ENCODE measurements at regions of chr9 and their contacts with region 1.

Region 1: DNA sequence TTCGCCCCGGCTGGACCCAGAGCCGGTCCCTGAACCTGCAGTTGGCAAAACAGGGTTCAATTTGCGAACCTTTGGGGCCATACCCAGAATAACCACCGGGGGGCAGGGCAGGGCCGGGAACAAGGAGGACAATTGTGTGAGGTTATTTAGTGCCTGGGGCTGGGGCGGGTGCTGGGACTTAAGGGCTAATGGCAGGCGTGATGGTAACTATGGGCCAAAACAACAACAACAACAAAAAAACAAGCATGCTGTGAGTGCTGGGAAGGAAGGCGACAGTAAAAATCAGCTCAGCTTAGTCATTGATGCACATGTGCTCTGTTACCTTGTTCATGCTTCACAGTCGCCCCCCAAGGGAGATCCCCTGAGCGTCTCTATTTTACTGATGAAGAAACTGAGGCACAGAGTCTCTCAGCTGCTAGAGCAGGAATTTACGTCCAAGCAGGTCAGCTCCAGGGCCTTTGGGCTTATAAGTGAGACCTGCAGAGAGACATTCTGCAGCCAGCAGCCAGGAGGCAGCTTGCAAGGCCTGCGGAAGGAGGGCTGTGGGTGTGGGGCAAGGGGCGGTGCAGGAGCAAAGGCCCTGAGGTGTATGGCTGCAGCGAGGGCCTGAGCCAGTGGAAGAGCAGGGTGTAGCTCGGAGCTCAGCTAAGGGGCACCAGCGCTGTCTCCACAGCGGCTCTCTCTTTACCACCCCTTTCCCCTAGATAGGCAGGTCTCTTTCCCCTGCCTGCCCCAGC is 106.0 kb downstream of the PHF2 start:
- DNase-seq: peak; percentile 77 to 79
- H3K4me3 ChIP-seq: no peak overlapping the region
- H3K27ac ChIP-seq: peak overlapping the region in 2 of 5 donors; percentile 80 to 86
- H3K4me1 ChIP-seq: peaks cover 0 to 51% (median 29%) of the 10 kb centered on the region in 4 donors
- H3K27me3 ChIP-seq: no peaks in the 10 kb centered on the region
- CTCF ChIP-seq: peak in 5 of 7 experiments; percentile 70 to 85 (median 82)
- EP300 ChIP-seq: no peak
- POLR2A ChIP-seq: no peak

Region 2: DNA sequence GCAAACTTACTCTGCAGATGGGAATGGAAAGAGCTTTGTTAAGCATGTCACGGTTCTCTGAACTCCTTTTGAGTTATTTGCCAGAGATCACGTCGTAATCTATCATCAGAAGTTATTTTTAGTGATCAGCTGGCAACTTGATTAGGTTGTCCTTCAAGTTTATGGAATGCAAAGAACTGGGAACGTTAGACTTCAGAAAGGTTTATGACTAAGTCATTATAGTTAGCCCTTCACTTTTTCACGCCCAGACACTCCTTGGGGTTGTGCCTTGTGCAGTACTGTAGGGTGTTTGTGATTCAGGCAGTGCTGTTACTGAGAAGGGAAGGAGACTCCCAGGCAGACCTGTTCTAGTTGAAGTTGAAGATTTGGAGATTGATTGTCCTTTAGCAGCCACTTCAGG is 132.8 kb before region 1 on chr9:
- intact Hi-C with region 1: no loop called
- DNase-seq: peak in 1 of 2 donors; percentile 42
- H3K4me3 ChIP-seq: no peak overlapping the region
- H3K27ac ChIP-seq: peak overlapping the region in 1 of 5 donors; percentile 58
- H3K4me1 ChIP-seq: peaks cover 0 to 14% (median 9%) of the 10 kb centered on the region in 4 donors
- H3K27me3 ChIP-seq: no peaks in the 10 kb centered on the region
- CTCF ChIP-seq: no peak
- EP300 ChIP-seq: no peak
- POLR2A ChIP-seq: no peak

Region 3: DNA sequence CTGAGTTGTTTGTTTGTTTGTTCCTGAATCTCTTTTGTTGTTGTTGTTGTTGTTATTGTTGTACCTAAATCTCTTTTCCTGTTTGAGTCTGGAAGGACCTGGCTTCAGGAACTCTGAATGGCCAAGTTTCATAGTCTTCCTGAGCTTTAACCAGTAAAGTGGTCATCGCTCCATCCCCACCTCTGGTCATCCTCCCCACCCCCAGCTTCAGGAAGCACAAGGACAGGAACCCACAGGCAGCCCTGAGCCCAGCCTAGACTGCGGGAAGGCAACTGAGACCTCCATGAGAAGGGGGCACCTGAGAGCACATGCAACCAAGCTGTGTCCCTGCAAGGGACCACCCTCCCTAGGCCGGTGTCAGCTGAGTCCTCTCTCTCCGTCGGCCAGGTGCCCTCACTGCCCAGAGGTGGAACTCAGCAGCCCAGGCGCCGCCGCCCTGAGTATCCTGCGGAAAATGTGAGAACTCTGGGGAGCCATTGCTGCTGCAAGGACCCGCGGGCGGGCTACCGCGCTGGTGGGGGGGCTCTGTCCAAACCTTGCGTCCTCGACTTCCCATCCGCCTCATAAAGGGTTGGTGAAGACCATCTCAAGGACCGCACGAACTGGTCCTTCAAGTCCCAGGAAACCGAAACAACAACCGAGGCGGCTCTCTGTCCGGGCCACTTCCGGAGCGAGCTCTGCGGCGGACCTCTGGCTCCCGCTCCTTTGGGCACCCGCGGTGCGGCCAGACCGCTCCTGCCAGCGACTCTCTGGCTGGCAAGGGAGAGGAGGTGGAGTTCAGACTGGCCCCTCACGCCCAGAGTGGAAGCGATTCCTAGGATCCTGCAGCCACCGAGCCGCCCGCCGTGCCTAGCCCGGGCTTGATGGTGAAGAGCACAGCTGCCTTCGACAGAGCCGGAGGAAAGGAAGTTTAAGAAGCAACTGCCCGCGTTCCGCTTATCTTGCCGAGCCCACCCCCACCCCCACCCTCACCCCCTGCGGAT is 268.5 kb after region 1 on chr9:
- intact Hi-C with region 1: loop called (anchors 5 kb)
- DNase-seq: peak; percentile 69
- H3K4me3 ChIP-seq: peak overlapping the region; percentile 55 to 67 (median 60)
- H3K27ac ChIP-seq: peak overlapping the region; percentile 9 to 93 (median 85)
- H3K4me1 ChIP-seq: peaks cover 36 to 88% (median 73%) of the 10 kb centered on the region in 4 donors
- H3K27me3 ChIP-seq: peaks cover 8 to 98% (median 97%) of the 10 kb centered on the region in 3 donors
- CTCF ChIP-seq: no peak
- EP300 ChIP-seq: no peak
- POLR2A ChIP-seq: no peak

Measured in stomach (tissue), 19 donors.